PC-9 (cell line): ENCODE measurements at regions of chr12 and their contacts with region 1.

Region 1: GRCh38 chr12:12983420-12984035 is 16.5 kb downstream of the HEBP1 start:
- DNase-seq: peak; percentile 40 to 41
- H3K4me3 ChIP-seq: no peak overlapping the region
- H3K27ac ChIP-seq: no peak overlapping the region
- H3K4me1 ChIP-seq: peaks cover 21% of the 10 kb centered on the region
- H3K27me3 ChIP-seq: no peaks in the 10 kb centered on the region
- CTCF ChIP-seq: peak; percentile 77

Region 2: GRCh38 chr12:11963841-11964471 is 1019.6 kb before region 1 on chr12:
- CTCF ChIA-PET with region 1: interaction called, 14 read pairs
- POLR2A ChIA-PET with region 1: no interaction called
- intact Hi-C with region 1: no loop called
- DNase-seq: no peak
- H3K4me3 ChIP-seq: no peak overlapping the region
- H3K27ac ChIP-seq: no peak overlapping the region
- H3K4me1 ChIP-seq: peaks cover 18% of the 10 kb centered on the region
- H3K27me3 ChIP-seq: no peaks in the 10 kb centered on the region
- CTCF ChIP-seq: no peak

Region 3: GRCh38 chr12:12716793-12717585 is 266.5 kb before region 1 on chr12 and contains the start of gene CDKN1B:
- CTCF ChIA-PET with region 1: interaction called, 3 read pairs
- POLR2A ChIA-PET with region 1: no interaction called
- intact Hi-C with region 1: loop called (anchors 2 kb)
- DNase-seq: peak; percentile 82 to 98
- H3K4me3 ChIP-seq: peak within 1 kb of the TSS; percentile 96
- H3K27ac ChIP-seq: peak within 1 kb of the TSS; percentile 98
- H3K4me1 ChIP-seq: peaks cover 38% of the 10 kb centered on the region
- H3K27me3 ChIP-seq: no peaks in the 10 kb centered on the region
- CTCF ChIP-seq: no peak
- total RNA-seq, gene CDKN1B: 54.9 and 67.5 TPM in 2 replicates

Region 4: GRCh38 chr12:12786716-12787601 is 196.6 kb before region 1 on chr12:
- CTCF ChIA-PET with region 1: interaction called, 10 read pairs
- POLR2A ChIA-PET with region 1: interaction called, 3 read pairs
- intact Hi-C with region 1: loop called (anchors 1 kb)
- DNase-seq: peak; percentile 57 to 83
- H3K4me3 ChIP-seq: peak overlapping the region; percentile 61; the same call in 1 of the 2 replicates
- H3K27ac ChIP-seq: peak overlapping the region; percentile 76
- H3K4me1 ChIP-seq: peaks cover 44% of the 10 kb centered on the region
- H3K27me3 ChIP-seq: no peaks in the 10 kb centered on the region
- CTCF ChIP-seq: no peak

Region 5: GRCh38 chr12:12837025-12837872 is 146.3 kb before region 1 on chr12:
- CTCF ChIA-PET with region 1: no interaction called
- POLR2A ChIA-PET with region 1: no interaction called
- intact Hi-C with region 1: loop called (anchors 1 kb)
- DNase-seq: peak; percentile 74 to 85
- H3K4me3 ChIP-seq: no peak overlapping the region
- H3K27ac ChIP-seq: peak overlapping the region; percentile 99
- H3K4me1 ChIP-seq: peaks cover 97% of the 10 kb centered on the region
- H3K27me3 ChIP-seq: no peaks in the 10 kb centered on the region
- CTCF ChIP-seq: peak; percentile 80

Region 6: GRCh38 chr12:12899530-12900380 is 83.8 kb before region 1 on chr12:
- CTCF ChIA-PET with region 1: interaction called, 5 read pairs
- POLR2A ChIA-PET with region 1: interaction called, 10 read pairs
- intact Hi-C with region 1: no loop called
- DNase-seq: peak in 1 of 2 experiments; percentile 65
- H3K4me3 ChIP-seq: peak overlapping the region; percentile 17; the same call in 1 of the 2 replicates
- H3K27ac ChIP-seq: peak overlapping the region; percentile 76
- H3K4me1 ChIP-seq: peaks cover 89% of the 10 kb centered on the region
- H3K27me3 ChIP-seq: no peaks in the 10 kb centered on the region
- CTCF ChIP-seq: no peak

Region 7: DNA sequence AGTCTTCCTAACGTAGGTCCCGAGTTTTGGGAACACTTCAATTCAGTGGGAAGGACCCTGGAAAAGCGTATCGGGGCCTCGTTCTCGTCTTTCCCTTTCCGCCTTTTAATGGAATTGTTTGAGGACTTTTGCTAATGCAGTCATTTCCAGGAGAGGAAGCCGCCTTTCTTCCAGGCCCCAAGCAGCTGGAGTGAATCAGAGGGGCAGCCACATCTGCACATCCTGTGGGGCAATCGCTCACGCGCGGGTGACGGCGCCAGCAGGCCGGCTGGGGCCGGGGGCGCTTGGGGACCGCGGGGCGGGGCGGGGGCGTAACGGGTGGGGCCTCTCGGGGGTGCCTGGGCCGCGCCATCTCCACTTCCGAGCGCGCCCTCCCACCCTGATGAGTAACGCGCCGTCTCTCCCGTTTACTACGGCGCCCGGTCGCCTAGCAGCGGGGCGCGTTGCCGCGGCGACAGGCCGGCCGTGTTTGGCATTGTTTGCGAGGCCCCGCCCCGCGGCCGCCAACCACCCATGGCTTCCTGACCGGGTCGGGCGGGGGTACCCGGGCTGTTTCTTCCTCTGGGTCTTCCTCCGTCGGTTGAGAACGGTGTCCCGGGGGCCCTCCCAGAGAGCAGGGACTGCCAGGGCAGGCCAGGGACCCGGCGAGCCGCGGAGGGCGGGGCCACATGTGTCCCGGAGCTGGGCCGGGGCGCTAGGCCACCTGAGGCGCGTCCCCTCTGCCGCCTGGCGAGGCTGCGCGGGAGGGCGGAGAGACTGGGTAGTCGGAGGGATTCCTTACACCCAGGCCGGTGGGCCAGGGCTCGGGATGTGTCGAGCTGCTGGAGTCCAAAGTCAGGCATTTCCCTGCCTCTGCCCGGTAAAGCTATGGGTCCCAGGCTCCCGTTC is 117.6 kb after region 1 on chr12:
- CTCF ChIA-PET with region 1: no interaction called
- POLR2A ChIA-PET with region 1: no interaction called
- intact Hi-C with region 1: no loop called
- DNase-seq: peak; percentile 87 to 99
- H3K4me3 ChIP-seq: peak overlapping the region; percentile 70
- H3K27ac ChIP-seq: peak overlapping the region; percentile 97
- H3K4me1 ChIP-seq: peaks cover 70% of the 10 kb centered on the region
- H3K27me3 ChIP-seq: no peaks in the 10 kb centered on the region
- CTCF ChIP-seq: no peak